Left ventricle myocardium inferior (tissue), 1 donor: ENCODE measurements at regions of chr17 and their contacts with region 1.

Region 1: GRCh38 chr17:28041844-28042656 is 427 bp upstream of the NLK start:
- DNase-seq: no peak
- H3K4me3 ChIP-seq: peak overlapping the region; percentile 96
- H3K27ac ChIP-seq: peak overlapping the region; percentile 96
- H3K4me1 ChIP-seq: peaks cover 58% of the 10 kb centered on the region
- H3K27me3 ChIP-seq: no peaks in the 10 kb centered on the region
- CTCF ChIP-seq: no peak

Region 2: GRCh38 chr17:28071891-28072606 is 30.0 kb after region 1 on chr17:
- intact Hi-C with region 1: loop called (anchors 1 kb)
- DNase-seq: no peak
- H3K4me3 ChIP-seq: no peak overlapping the region
- H3K27ac ChIP-seq: no peak overlapping the region
- H3K4me1 ChIP-seq: peaks cover 7% of the 10 kb centered on the region
- H3K27me3 ChIP-seq: no peaks in the 10 kb centered on the region
- CTCF ChIP-seq: no peak

Region 3: GRCh38 chr17:28118362-28118761 is 76.3 kb after region 1 on chr17:
- intact Hi-C with region 1: no loop called
- DNase-seq: no peak
- H3K4me3 ChIP-seq: peak overlapping the region; percentile 14
- H3K27ac ChIP-seq: peak overlapping the region; percentile 43
- H3K4me1 ChIP-seq: peaks cover 43% of the 10 kb centered on the region
- H3K27me3 ChIP-seq: no peaks in the 10 kb centered on the region
- CTCF ChIP-seq: no peak